Aorta (tissue), 5 donors: ENCODE measurements at regions of chr6 and their contacts with region 1.

Region 1: DNA sequence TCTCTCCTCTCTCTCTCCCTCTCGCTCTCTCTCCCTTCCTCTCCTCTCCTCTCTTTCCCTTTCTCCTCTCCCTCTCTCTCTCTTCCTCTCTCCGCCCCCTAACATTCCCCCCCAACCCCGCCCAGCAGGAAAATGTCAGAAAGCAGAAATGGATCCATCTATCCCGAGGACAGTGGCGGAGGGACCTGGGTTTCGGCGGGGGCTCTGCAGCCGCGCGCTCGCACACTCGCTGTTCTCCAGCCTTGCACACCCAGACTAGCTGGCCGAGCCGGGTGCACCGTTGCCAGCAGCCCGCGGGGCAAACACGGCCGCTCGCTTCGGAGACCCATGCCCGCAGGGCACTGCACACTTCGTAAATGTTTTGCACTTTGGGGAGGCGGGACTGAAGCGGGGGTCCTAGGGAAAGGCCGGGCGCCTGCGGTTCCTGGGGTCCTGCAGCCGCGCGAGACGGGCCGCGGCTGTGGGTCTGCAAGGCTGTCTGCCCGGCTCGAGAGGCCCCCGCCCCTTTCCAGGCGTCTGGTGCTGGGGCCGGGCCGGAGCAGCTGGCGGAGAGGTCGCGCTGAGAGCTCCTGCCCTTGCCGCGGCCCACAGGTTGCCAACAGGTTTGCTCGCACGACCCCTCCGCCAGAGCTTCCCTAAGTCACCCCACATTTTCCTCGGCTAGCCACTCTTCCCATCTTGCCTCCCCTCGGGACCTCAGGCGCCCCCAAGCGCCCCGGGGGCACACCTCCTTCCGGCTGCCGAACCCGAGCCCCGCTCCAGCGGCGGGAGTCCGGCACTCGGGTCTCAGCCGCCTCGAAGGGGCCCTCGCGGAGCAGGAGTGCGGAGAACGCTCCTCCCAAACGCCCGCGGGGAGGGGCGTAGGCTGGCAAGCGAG is 816 bp upstream of the MDGA1 start:
- DNase-seq: peak; percentile 68 to 85
- ATAC-seq: peak; percentile 58
- H3K4me3 ChIP-seq: peak overlapping the region; percentile 40 to 75
- H3K27ac ChIP-seq: no peak overlapping the region
- H3K4me1 ChIP-seq: no peaks in the 10 kb centered on the region
- H3K27me3 ChIP-seq: no peaks in the 10 kb centered on the region

Region 2: DNA sequence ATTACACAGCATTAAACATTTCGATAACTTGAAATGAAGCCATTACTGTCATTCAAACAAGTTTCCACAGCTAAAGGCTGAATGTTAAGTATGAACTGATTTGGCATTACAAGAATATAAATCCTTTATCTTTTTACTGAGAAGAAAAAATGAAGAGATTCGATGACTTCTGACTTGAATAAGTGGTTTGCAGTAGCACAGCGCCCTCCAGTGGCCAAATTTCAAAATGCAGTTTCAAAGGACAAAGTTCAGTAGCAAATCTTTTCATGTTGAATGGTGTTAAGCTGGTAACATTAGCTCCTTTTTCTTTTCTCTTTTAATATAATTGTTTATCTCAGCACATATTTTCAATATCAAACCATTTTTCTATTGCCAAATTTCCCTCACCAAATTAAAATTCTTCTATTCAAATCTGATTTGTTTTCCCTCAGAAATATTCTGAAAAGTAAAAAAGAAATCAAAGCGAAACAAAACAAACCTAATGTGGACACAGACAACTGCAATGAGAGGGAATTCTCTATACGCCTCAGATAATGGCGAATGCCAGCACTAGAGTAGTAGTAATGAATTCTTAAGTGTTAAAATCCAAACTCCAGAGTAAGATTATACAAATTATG is 795.5 kb after region 1 on chr6:
- intact Hi-C with region 1: loop called (anchors 5 to 10 kb)
- DNase-seq: peak; percentile 67 to 84
- ATAC-seq: no peak
- H3K4me3 ChIP-seq: no peak overlapping the region
- H3K27ac ChIP-seq: no peak overlapping the region
- H3K4me1 ChIP-seq: no peaks in the 10 kb centered on the region
- H3K27me3 ChIP-seq: no peaks in the 10 kb centered on the region